Common myeloid progenitor, CD34-positive (primary cell): ENCODE measurements at regions of chr2 and their contacts with region 1.

Region 1: GRCh38 chr2:224442071-224442967 is 40.4 kb upstream of the FAM124B start:
- DNase-seq: peak; percentile 36 to 71 (median 62)
- H3K4me3 ChIP-seq: peak overlapping the region; percentile 42 to 82 (median 69)
- H3K27ac ChIP-seq: no peak overlapping the region
- H3K4me1 ChIP-seq: peaks cover 0 to 10% (median 7%) of the 10 kb centered on the region in 4 experiments
- H3K27me3 ChIP-seq: no peaks in the 10 kb centered on the region

Region 2: GRCh38 chr2:224407241-224407701 is 35.0 kb before region 1 on chr2:
- CTCF ChIA-PET with region 1: interaction called, 25 read pairs
- POLR2A ChIA-PET with region 1: interaction called, 5 read pairs
- DNase-seq: peak in 2 of 3 donors; percentile 54 to 73
- H3K4me3 ChIP-seq: no peak overlapping the region
- H3K27ac ChIP-seq: no peak overlapping the region
- H3K4me1 ChIP-seq: peaks cover 13 to 57% (median 33%) of the 10 kb centered on the region in 4 experiments
- H3K27me3 ChIP-seq: no peaks in the 10 kb centered on the region

Region 3: GRCh38 chr2:224432003-224432574 is 10.2 kb before region 1 on chr2:
- CTCF ChIA-PET with region 1: interaction called, 30 read pairs
- POLR2A ChIA-PET with region 1: no interaction called
- DNase-seq: no peak
- H3K4me3 ChIP-seq: no peak overlapping the region
- H3K27ac ChIP-seq: no peak overlapping the region
- H3K4me1 ChIP-seq: peaks cover 0 to 20% (median 16%) of the 10 kb centered on the region in 4 experiments
- H3K27me3 ChIP-seq: no peaks in the 10 kb centered on the region